PC-9 (cell line): ENCODE measurements at regions of chr15 and their contacts with region 1.

Region 1: DNA sequence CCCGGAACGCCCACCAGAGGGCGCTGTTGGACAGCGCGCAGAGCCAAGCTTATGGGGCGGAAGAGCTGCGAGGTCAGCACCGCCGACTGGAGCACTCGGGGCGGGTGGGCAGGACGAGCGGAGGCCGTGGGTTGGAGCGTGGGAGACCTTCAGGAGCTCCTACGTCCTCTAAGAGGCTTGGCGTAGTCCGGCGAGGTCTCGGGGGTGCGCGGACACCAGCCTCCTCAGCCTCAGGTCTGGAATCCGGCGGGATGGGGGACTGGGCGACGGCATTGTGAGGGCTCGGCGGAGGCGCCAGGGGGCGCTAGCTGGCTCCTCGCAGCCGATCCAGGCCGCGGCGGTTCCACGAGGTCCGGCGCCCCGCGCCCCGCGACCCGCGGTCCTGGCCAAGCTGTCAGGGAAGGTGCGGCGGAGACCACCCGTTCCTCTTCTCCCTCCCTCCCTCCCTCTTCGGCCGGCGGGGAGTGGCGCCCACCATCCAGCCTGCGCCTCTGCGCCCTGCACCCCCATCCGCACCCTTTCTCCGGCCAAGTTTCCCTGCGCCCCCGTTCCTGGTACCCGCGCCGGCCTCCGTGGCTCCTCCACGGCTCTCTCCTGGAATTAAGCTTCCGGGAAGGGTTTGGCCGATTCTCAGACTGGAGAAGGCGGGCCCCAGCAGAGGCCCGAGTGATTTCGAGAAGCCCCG is 24.3 kb upstream of the POLG start:
- DNase-seq: peak; percentile 53 to 80
- H3K4me3 ChIP-seq: peak overlapping the region; percentile 62
- H3K27ac ChIP-seq: no peak overlapping the region
- H3K4me1 ChIP-seq: no peaks in the 10 kb centered on the region
- H3K27me3 ChIP-seq: peaks cover 69% of the 10 kb centered on the region
- CTCF ChIP-seq: peak; percentile 96

Region 2: DNA sequence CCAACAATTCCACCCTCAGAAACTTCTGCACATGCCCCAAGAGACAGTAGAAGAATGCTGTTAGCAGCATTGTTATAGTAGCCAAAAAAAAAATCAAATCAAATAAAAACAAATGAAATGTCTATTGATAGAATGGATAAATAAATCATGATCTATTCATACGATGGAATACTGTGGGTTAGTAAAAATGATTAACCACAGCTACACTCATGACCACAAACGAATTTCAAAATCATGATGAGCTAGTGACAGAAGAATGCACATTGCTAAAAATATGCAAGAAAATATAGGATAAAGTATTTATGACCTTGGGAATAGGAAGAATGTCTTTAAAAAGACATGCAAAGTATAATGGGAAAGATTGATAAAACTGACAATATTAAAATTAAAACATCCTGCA is 613.2 kb before region 1 on chr15:
- CTCF ChIA-PET with region 1: no interaction called
- POLR2A ChIA-PET with region 1: no interaction called
- intact Hi-C with region 1: no loop called
- DNase-seq: no peak
- H3K4me3 ChIP-seq: no peak overlapping the region
- H3K27ac ChIP-seq: no peak overlapping the region
- H3K4me1 ChIP-seq: no peaks in the 10 kb centered on the region
- H3K27me3 ChIP-seq: peaks cover 57% of the 10 kb centered on the region
- CTCF ChIP-seq: no peak

Region 3: GRCh38 chr15:89346516-89347231 is 12.2 kb before region 1 on chr15:
- CTCF ChIA-PET with region 1: interaction called, 10 read pairs
- POLR2A ChIA-PET with region 1: no interaction called
- intact Hi-C with region 1: no loop called
- DNase-seq: no peak
- H3K4me3 ChIP-seq: no peak overlapping the region
- H3K27ac ChIP-seq: no peak overlapping the region
- H3K4me1 ChIP-seq: peaks cover 7% of the 10 kb centered on the region; the same call in 1 of the 2 replicates
- H3K27me3 ChIP-seq: no peaks in the 10 kb centered on the region
- CTCF ChIP-seq: no peak

Region 4: DNA sequence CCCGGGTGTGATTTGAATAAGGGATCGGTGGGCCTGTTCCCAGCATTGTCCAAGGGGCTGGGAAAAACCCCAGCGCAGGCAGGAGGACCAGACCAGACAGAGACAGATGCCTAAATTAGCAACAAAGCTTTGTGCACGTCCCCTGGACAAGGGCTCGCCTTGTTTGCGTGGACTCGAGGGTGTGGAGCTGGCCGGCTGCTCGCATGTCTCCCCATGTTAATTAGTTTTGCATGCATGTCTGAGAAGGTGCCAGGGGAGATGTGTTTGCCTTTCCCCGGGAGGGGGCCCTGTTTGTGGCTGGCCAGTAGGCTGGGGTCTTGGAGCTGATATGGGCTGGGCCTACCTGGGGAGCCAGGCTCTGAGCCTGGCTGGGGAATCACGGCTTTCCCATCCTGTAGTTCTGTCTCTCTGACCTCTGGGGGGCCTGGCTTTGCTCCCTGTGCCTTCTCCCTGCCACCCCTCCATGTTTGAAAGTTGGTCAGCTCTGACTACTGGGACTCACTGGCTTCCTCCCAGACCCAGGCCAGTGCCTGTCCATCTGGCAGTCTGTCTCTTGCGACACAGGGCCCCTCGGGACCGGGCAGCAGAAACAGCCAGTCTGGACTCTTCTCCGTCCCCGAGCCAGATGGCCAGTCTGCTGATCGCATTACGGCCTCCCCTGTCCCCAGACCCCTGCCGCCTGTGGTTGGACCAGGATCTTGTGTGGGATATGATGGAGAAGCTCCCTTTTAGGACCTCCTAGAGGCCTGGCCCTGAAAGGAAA is 31.1 kb after region 1 on chr15:
- CTCF ChIA-PET with region 1: no interaction called
- POLR2A ChIA-PET with region 1: no interaction called
- intact Hi-C with region 1: no loop called
- DNase-seq: peak in 1 of 2 experiments; percentile 19
- H3K4me3 ChIP-seq: no peak overlapping the region
- H3K27ac ChIP-seq: no peak overlapping the region
- H3K4me1 ChIP-seq: no peaks in the 10 kb centered on the region
- H3K27me3 ChIP-seq: no peaks in the 10 kb centered on the region
- CTCF ChIP-seq: no peak

Region 5: GRCh38 chr15:89406940-89407607 is 48.2 kb after region 1 on chr15:
- CTCF ChIA-PET with region 1: interaction called, 10 read pairs
- POLR2A ChIA-PET with region 1: no interaction called
- intact Hi-C with region 1: no loop called
- DNase-seq: no peak
- H3K4me3 ChIP-seq: no peak overlapping the region
- H3K27ac ChIP-seq: no peak overlapping the region
- H3K4me1 ChIP-seq: no peaks in the 10 kb centered on the region
- H3K27me3 ChIP-seq: peaks cover 33% of the 10 kb centered on the region
- CTCF ChIP-seq: no peak

Region 6: DNA sequence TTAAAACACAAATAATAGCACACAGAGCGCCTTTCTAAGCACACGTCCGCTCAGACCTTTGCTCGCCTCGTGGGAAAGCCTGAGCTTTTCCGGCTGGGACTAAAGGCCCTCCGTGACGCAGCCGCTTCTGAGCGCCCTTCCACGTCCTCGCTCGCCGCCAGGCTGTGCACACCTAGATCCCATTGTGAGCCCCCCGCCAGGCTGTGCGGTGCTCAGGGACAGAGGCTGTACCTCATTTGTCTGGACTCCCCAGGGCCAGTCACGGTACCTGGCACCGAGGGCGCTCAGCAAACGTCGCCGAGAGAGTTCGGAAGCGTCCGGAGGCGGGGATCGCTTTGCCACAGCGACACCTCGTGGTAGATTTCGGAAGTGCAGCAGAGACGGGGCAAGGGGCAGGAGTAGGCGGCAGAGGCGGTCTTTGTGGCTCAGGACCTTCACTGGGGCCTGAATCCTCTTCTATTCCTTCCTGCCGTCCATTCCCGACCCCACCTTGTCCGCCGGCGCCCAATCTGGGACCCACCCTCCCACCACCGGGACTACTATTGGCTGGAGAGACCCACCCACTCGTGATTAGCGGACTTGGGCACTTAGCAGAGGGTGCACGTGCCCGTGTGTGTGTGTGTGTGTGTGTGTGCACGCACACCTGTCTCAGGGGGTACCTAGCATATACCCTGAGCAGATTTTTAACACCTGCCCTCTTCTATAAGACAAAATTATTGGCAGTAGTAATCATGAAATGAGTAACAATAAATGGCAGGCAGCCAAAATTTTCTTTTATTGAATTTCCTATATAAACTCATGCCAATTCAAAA is 71.8 kb after region 1 on chr15:
- CTCF ChIA-PET with region 1: interaction called, 15 read pairs
- POLR2A ChIA-PET with region 1: no interaction called
- intact Hi-C with region 1: loop called (anchors 1 kb)
- DNase-seq: peak in 1 of 2 experiments; percentile 82
- H3K4me3 ChIP-seq: peak overlapping the region; percentile 54
- H3K27ac ChIP-seq: no peak overlapping the region
- H3K4me1 ChIP-seq: peaks cover 12% of the 10 kb centered on the region; the same call in 1 of the 2 replicates
- H3K27me3 ChIP-seq: peaks cover 5% of the 10 kb centered on the region
- CTCF ChIP-seq: peak; percentile 97

Region 7: GRCh38 chr15:89472785-89473256 is 113.9 kb after region 1 on chr15:
- CTCF ChIA-PET with region 1: interaction called, 15 read pairs
- POLR2A ChIA-PET with region 1: no interaction called
- intact Hi-C with region 1: loop called (anchors 1 kb)
- DNase-seq: peak; percentile 42 to 69
- H3K4me3 ChIP-seq: no peak overlapping the region
- H3K27ac ChIP-seq: no peak overlapping the region
- H3K4me1 ChIP-seq: peaks cover 13% of the 10 kb centered on the region; the same call in 1 of the 2 replicates
- H3K27me3 ChIP-seq: peaks cover 20% of the 10 kb centered on the region
- CTCF ChIP-seq: peak; percentile 89

Region 8: DNA sequence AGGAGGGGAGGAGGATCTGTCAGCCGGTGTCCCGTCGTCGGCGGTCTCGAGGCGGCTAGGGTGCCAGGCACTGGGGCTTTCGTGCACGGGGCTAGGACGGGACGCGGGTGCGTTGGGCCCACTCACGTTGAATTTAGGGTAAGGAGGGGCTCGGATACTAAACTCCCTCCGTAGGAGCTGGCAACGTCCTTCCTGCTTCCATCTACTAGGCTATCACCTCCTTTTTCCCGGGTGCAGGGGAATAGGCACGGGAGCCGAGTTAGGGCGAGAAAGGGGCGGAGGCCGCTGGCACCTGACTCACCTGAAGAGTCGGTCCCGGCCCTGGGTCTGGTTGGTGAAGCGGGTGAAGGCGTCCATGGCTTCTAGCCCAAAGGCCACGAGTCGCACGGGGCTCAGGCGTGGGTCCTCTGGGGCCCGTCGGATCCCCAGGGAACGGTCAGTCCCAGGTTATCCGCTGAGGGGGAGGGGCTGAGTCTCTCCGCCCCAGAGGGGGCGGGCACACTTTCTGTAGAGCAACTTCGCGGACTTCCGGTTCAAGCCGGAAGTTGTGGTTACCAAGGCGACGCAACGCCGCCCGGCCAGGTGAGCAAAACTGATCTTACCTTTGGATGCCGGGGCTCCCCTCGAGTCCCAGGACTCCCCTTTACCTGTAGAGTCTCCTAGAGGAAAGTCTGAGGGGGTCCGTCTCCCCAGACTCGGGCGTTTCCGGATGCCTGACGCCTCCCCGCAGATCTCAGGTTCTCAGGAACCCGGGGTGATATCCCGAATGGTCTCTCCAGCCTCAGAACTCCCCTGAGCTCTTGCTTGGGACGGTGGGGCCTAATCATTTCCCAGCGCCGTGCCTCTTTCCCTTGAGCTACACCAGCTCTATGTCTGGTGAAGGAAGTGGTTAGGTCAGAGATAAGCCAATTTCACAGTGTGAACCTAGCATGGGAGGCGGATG is 331.6 kb after region 1 on chr15 and contains the starts of genes PEX11A and WDR93:
- CTCF ChIA-PET with region 1: no interaction called
- POLR2A ChIA-PET with region 1: interaction called, 11 read pairs
- intact Hi-C with region 1: no loop called
- DNase-seq: peak; percentile 75 to 84
- H3K4me3 ChIP-seq: peak within 1 kb of the TSS; percentile 82
- H3K27ac ChIP-seq: 0 out of 2 replicates have a peak within 1 kb of the TSS, but pooled peaks have one; percentile 24
- H3K4me1 ChIP-seq: peaks cover 36% of the 10 kb centered on the region
- H3K27me3 ChIP-seq: no peaks in the 10 kb centered on the region
- CTCF ChIP-seq: no peak
- total RNA-seq, gene PEX11A: 11.7 and 12.8 TPM in 2 replicates
- total RNA-seq, gene WDR93: 1.1 and 1.8 TPM in 2 replicates